Aorta (tissue), 5 donors: ENCODE measurements at regions of chr9 and their contacts with region 1.

Region 1: GRCh38 chr9:117777823-117778222 is 73.6 kb downstream of the TLR4 start:
- DNase-seq: no peak
- ATAC-seq: no peak
- H3K4me3 ChIP-seq: no peak overlapping the region
- H3K27ac ChIP-seq: no peak overlapping the region
- H3K4me1 ChIP-seq: peaks cover 0 to 8% of the 10 kb centered on the region in 2 donors
- H3K27me3 ChIP-seq: no peaks in the 10 kb centered on the region

Region 2: DNA sequence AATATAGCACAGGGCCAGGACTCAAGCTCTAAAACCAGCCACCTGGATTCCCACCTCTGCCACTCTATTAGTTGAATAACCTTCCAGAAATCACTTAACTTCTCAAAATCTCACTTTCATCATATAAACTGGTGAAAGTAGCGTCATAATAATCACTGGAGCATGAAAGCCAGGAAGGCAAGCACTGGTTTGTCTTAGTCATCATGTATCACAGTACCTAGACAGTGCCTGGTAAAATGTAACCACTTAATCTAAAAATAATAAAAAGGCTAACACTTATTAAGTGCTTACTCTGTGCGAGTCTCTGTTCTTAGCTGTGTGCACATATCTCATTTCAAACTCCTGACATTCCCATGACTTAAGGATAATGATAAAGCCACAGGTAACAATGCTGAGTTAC is 472.4 kb before region 1 on chr9:
- intact Hi-C with region 1: no loop called
- DNase-seq: no peak
- ATAC-seq: no peak
- H3K4me3 ChIP-seq: no peak overlapping the region
- H3K27ac ChIP-seq: no peak overlapping the region
- H3K4me1 ChIP-seq: peaks cover 0 to 2% of the 10 kb centered on the region in 2 donors
- H3K27me3 ChIP-seq: no peaks in the 10 kb centered on the region

Region 3: GRCh38 chr9:117555964-117556629 is 221.7 kb before region 1 on chr9:
- intact Hi-C with region 1: no loop called
- DNase-seq: peak in 1 of 2 donors; percentile 74
- ATAC-seq: no peak
- H3K4me3 ChIP-seq: no peak overlapping the region
- H3K27ac ChIP-seq: no peak overlapping the region
- H3K4me1 ChIP-seq: no peaks in the 10 kb centered on the region
- H3K27me3 ChIP-seq: peaks cover 0 to 2% of the 10 kb centered on the region in 2 donors

Region 4: GRCh38 chr9:117704024-117704575 is 73.7 kb before region 1 on chr9 and contains the start of gene TLR4:
- intact Hi-C with region 1: loop called in 1 of 2 experiments (anchors 5 kb)
- DNase-seq: peak; percentile 80 to 82
- ATAC-seq: peak; percentile 83
- H3K4me3 ChIP-seq: peak within 1 kb of the TSS; percentile 40 to 76
- H3K27ac ChIP-seq: peak within 1 kb of the TSS; percentile 68 to 98
- H3K4me1 ChIP-seq: no peaks in the 10 kb centered on the region
- H3K27me3 ChIP-seq: no peaks in the 10 kb centered on the region
- total RNA-seq, gene TLR4: 35.0 to 37.2 TPM